Astrocyte of the cerebellum (primary cell): ENCODE measurements at regions of chr6 and their contacts with region 1.

Region 1: DNA sequence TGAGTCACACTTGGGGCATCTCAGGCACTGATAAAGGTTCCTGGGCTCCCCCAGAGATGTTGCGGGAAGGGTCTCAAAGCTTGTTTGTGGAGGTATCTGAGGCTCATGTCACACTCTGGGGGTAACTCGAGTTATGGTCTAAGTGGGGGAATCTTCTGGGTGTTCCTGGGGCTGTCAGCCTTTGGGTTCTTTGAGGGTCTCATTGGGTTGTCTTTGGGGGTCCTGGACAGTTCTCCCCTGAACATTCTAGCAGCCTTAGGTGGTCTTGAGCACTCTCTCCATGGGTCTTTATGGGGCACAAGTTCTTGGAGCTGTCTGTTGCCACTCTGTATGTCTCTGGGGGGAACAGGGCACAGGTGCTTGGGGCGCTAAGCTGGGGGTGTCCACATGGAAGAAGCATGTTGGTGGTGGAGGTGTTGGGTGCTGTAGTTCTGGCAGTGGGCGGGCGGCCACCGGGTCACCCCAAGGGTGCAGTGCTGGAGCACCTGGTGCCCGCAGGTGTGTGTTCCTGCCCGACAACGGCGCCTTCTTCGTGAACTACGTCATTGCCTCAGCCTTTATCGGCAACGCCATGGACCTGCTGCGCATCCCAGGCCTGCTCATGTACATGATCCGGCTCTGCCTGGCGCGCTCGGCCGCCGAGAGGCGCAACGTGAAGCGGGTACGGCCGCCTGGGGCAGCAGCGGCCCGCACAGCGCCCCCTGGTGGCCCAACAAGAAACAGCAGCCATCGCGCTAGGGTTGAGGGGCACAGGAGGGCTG is 7.1 kb upstream of the CAPN11 start:
- DNase-seq: peak; percentile 34
- H3K4me3 ChIP-seq: no peak overlapping the region
- CTCF ChIP-seq: peak; percentile 98

Region 2: DNA sequence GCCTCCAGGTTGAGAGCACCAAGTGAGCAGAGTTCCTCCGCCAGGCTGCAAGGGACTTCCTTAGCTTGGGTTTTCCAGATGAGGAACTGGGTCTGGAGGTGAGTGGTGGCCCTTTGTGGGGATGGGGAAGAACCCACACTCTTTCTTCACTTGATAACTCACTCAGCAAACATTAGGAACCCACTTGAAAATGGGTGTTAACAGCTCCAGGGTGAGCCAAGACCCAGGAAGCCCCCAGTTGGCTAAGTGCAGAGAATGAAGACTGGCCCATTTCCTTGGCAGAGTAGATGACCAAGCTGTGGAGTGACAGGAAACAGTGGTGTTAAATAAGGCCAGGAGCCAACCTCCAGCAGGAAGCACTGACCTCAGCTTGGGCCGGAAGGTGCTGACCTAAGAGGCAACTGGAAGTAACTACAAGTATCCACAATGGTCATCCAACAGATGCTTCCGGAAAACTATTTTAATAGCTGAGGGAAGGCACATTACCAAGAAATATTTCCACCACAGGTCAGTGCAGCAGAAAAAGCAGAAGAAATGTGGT is 47.0 kb before region 1 on chr6:
- in situ Hi-C with region 1: loop called (anchors 5 kb)
- DNase-seq: no peak
- H3K4me3 ChIP-seq: no peak overlapping the region
- CTCF ChIP-seq: no peak